ENCODE measurements at regions of chr17 and their contacts with region 1.

Region 1: DNA sequence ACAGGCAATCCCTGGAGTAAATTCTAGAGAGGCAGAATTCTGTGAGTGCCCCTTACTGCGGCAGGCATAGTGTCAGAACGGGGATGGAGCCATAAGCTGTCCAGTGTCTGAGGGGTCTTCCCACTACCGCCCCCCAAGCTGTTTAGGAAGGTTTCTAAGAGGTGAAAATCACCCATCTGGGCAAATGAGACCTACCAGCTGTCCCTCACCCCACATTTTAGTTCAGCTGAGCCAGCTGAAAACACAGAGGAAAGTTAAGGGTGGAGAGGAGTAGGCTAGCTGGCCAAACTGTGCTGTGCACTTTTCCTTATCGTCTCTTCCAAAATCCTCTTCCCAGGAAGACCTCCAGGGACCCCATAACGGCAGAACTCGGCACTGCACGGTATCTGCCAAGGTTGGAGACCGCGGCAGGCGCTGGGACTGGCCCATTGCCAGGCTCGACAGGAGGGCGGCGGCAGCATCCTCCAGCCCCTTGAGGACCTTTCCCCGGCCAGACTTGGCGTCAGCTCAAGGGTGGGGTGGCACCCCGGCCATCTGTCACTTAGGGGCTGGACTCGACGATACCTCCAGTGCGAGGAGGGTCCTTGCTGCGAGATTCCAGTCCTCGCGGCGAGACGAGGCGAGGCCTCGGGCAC is 955 bp downstream of the ACLY start:
- DNase-seq: peak; percentile 56 to 79 (median 71)
- ATAC-seq: peak in 3 of 4 donors; percentile 18 to 27 (median 18)
- H3K4me3 ChIP-seq: peak overlapping the region; percentile 69 to 100 (median 92)
- H3K27ac ChIP-seq: peak overlapping the region; percentile 37 to 94 (median 89)
- H3K4me1 ChIP-seq: peaks cover 0 to 38% (median 29%) of the 10 kb centered on the region in 12 donors
- H3K27me3 ChIP-seq: no peaks in the 10 kb centered on the region
- CTCF ChIP-seq: no peak
- POLR2A ChIP-seq: no peak

Region 2: DNA sequence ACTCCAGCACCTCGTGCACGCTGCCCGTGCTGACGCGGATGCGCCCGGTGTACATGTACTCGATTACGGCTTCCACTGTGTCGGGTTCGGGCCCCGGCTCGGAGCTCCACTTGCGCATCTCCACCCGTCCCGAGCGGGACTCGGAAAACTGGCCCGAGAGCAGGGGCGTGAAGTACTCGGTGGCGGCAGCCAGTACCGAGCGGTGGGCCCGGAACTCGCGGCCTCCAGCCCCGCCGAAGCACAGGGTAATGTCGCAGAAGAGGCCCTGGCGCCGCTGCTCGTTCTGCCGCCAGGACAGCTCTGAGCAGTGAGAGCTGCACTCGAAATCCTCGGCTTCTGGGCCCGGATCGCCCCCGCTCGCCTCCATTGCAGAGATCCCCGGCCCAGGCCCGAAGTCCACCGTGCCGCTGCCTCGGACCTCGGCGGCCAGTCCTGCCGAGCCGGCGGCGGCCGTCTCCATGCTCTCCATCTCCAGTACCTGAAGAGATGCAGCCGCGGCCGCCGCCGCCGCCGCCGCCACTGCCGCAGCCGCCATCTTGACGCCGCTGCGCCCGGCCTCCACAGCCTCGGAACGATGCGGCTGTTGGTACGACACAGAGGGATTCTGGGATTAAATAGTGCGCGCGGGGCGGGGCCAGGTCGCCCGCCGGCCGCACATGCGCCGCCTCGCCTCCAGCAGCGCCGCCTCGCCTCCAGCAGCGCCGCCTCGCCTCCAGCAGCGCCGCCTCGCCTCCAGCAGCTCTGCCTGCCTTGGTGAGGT is 52.8 kb before region 1 on chr17 and contains the start of gene KLHL11:
- intact Hi-C with region 1: loop called in 1 of 10 experiments (anchors 2 kb)
- DNase-seq: peak; percentile 89 to 92 (median 91)
- ATAC-seq: peak; percentile 92 to 99 (median 98)
- H3K4me3 ChIP-seq: peak within 1 kb of the TSS; percentile 77 to 100 (median 96)
- H3K27ac ChIP-seq: peak within 1 kb of the TSS; percentile 75 to 95 (median 90)
- H3K4me1 ChIP-seq: peaks cover 0 to 48% (median 28%) of the 10 kb centered on the region in 12 donors
- H3K27me3 ChIP-seq: no peaks in the 10 kb centered on the region
- CTCF ChIP-seq: peak in 4 of 12 donors; percentile 30 to 39 (median 34)
- POLR2A ChIP-seq: peak; percentile 82 to 97
- total RNA-seq, gene KLHL11: 2.3 to 5.9 (median 3.6) TPM

Region 3: DNA sequence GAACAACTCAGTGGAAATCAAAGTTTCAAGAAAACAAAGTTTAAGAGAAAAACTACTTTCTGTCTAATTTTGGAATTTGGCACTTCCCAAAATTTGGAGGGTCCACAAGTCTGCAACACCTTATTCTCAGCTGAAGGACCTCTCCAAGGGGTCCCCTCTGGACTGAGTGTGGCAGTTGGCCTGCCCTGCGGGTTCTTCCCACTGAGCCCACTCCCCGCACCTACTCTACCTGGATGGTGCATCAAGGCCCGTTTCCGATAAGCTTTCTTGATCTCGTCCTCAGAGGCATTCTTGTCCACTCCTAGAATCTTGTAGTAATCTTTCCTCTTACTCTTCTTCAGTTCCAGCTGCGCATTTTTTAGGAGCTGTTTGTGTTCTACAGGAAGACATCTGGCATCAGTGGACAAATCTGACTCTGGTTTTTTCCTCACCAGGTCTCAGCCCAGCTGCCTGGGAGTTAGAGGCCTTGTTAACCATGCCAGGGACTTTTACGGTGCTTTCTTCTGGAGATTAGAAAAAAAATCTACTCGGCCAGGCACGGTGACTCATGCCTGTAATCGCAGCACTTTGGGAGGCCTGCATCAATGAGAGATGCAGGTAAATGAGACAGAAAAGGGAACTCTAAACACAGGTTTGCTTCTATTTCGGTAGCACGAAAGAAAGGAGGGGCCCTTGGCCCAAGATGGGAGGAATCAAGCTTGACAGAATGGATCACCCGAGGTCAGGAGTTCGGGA is 64.4 kb after region 1 on chr17:
- intact Hi-C with region 1: no loop called
- DNase-seq: no peak
- ATAC-seq: no peak
- H3K4me3 ChIP-seq: no peak overlapping the region
- H3K27ac ChIP-seq: peak overlapping the region in 1 of 12 donors; percentile 26
- H3K4me1 ChIP-seq: no peaks in the 10 kb centered on the region
- H3K27me3 ChIP-seq: no peaks in the 10 kb centered on the region
- CTCF ChIP-seq: no peak
- POLR2A ChIP-seq: no peak

Measured in heart left ventricle (tissue), 16 donors.